ENCODE measurements at regions of chr6 and their contacts with region 1.

Region 1: DNA sequence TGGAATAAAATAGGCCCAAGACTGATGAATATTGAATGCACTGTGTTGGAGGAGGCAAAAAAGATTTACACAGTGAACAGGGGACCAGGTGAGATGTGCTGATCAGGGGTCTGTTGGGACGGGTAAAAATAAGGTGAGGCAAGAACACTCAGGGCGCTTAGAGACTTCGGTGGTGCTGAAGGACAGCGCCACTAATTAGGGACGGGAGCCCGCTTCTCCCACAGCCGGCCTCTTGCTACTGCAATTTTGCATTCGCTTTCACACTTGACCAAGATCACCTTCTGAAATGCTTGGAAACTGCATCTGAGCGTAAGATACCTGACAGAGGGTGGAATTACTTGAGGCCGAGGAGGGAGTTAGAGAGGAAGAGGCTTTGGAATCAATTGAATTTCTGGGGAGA is 7.3 kb downstream of the TFAP2D start:
- DNase-seq: no peak
- H3K4me3 Mint-ChIP-seq: no peak overlapping the region
- H3K27ac Mint-ChIP-seq: no peak overlapping the region
- H3K4me1 Mint-ChIP-seq: peaks cover 5% of the 10 kb centered on the region
- H3K27me3 Mint-ChIP-seq: peaks cover 63% of the 10 kb centered on the region

Region 2: DNA sequence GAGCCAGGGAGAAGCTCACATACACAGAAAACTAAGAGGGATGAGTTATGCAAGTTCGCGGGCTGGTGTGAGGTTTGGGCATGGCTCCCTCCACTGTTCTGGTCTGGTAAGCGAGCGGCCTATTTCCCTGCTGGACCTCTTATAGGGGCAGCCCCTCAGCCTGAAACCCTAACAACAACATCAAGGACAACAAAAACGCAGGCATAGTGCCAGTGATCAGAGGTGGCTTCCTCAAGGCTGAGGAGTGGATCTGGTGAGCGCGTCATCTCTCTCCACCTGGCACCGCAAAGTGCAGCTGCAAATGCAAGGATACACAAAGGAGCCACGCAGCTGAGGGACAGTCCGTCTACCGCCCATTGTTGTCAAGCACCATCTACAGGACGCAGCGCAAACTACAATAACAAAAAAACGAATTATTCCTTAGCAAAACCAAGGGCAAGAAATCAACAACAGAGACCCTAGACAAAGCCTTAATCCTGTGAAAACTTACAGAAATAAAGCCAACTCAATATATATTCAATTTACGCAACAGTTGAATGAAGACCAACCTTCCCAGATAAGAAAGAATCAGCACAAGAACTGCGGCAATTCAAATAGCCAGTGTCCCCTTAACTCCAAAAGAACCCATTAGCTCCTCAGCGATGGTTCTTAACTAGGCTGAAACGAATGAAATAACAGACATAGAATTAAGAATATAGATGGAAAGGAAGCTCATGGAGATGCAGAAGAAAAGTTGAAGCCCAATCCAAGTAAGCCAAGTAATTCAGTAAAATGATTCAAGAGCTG is 689.7 kb before region 1 on chr6:
- intact Hi-C with region 1: no loop called
- DNase-seq: no peak
- H3K4me3 Mint-ChIP-seq: no peak overlapping the region
- H3K27ac Mint-ChIP-seq: no peak overlapping the region
- H3K4me1 Mint-ChIP-seq: no peaks in the 10 kb centered on the region
- H3K27me3 Mint-ChIP-seq: no peaks in the 10 kb centered on the region

Region 3: GRCh38 chr6:50843842-50844241 is 123.2 kb after region 1 on chr6:
- intact Hi-C with region 1: loop called (anchors 2 kb)
- DNase-seq: no peak
- H3K4me3 Mint-ChIP-seq: no peak overlapping the region
- H3K27ac Mint-ChIP-seq: no peak overlapping the region
- H3K4me1 Mint-ChIP-seq: no peaks in the 10 kb centered on the region
- H3K27me3 Mint-ChIP-seq: peaks cover 74% of the 10 kb centered on the region